BJ (cell line): ENCODE measurements at regions of chr6 and their contacts with region 1.

Region 1: DNA sequence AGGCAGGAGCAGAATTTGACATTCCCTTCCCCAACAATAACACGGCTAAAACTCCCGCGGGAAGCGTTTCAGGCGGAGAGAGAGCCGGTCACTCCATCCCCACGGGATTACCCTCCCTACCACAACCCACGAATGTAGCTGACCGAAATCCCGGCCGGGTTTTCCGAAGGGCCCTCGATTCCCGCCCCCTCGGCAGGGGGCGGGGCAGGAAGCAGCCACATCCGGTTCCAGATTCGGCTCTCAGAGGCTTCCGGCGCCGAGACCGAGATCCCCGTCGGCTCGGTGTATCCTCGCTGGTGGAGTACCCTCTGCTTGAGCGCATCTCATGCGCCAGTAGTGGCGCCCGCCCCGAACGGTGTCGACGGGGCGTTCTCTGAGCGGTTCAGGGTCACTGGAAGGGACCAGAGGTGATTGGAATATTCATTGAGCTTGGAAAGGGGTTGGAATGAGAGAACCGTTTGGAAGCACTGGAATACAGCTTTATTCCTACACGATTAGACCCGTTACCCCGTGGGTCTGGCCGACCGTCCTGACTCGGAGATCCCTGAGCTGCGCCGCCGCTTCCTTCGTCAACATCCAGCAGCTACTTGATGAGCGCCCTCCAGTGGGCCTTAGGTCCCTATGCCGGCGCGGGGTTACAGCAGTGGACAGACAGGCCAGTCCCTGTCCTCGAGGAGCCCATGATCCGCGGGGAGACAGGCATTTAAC is 649 bp upstream of the RGL2 start:
- DNase-seq: no peak
- H3K4me3 ChIP-seq: peak overlapping the region; percentile 81
- H3K27me3 ChIP-seq: no peaks in the 10 kb centered on the region
- CTCF ChIP-seq: peak; percentile 86

Region 2: GRCh38 chr6:33200219-33201146 is 98.9 kb before region 1 on chr6 and contains the starts of genes RXRB and SLC39A7:
- CTCF ChIA-PET with region 1: interaction called, 3 read pairs
- POLR2A ChIA-PET with region 1: interaction called, 24 read pairs
- DNase-seq: peak; percentile 96
- H3K4me3 ChIP-seq: peak within 1 kb of the TSS; percentile 78
- H3K27me3 ChIP-seq: no peaks in the 10 kb centered on the region
- CTCF ChIP-seq: no peak
- polyA plus RNA-seq, gene RXRB: 51.3 and 67.9 TPM in 2 replicates
- polyA plus RNA-seq, gene SLC39A7: 116 and 151 TPM in 2 replicates

Region 3: DNA sequence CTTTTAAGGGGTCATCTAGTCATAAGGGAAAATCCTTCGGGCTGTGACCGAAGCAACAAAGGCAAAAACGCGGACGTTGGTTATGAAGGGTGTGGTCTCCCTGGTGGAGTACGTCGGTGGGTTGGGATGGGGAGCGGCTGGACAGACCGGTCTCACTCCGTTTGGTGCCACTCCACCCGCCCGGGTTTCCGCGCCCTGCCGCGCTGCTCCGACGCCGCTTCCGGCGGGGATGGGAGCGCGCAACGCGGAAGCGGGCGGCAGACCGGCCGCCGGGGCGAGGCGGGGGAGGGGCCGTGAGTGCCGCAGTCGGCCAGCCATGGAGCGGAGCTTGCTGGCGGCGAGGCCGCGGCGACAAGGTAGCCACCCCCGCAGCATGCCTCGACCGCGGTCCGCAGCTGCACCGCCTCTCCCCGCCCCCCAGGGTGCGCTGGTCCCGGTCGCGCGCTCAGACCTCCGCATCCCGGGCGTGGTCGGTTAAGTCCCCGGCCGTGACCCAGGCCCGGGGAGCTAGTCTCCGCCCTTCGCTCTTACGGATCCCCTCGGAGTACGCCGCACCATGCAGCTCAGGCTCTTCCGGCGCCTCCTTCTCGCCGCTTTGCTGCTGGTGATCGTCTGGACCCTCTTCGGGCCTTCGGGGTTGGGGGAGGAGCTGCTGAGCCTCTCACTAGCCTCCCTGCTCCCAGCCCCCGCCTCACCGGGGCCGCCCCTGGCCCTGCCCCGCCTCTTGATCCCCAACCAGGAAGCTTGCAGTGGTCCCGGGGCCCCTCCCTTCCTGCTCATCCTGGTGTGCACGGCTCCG is 22.3 kb before region 1 on chr6 and contains the start of gene B3GALT4:
- CTCF ChIA-PET with region 1: interaction called, 13 read pairs
- POLR2A ChIA-PET with region 1: no interaction called
- DNase-seq: no peak
- H3K4me3 ChIP-seq: peak within 1 kb of the TSS; percentile 49
- H3K27me3 ChIP-seq: no peaks in the 10 kb centered on the region
- CTCF ChIP-seq: peak; percentile 39; the same call in 1 of the 2 replicates
- polyA plus RNA-seq, gene B3GALT4: 2.2 and 4.0 TPM in 2 replicates

Region 4: GRCh38 chr6:33288921-33289748 is 10.3 kb before region 1 on chr6 and contains the starts of genes PFDN6 and WDR46:
- CTCF ChIA-PET with region 1: interaction called, 21 read pairs
- POLR2A ChIA-PET with region 1: no interaction called
- DNase-seq: peak; percentile 80
- H3K4me3 ChIP-seq: peak within 1 kb of the TSS; percentile 64
- H3K27me3 ChIP-seq: no peaks in the 10 kb centered on the region
- CTCF ChIP-seq: no peak
- polyA plus RNA-seq, gene PFDN6: 49.0 and 55.5 TPM in 2 replicates
- polyA plus RNA-seq, gene WDR46: 45.6 and 78.9 TPM in 2 replicates

Region 5: GRCh38 chr6:33313709-33314514 is 14.5 kb after region 1 on chr6 and contains the start of gene TAPBP:
- CTCF ChIA-PET with region 1: interaction called, 16 read pairs
- POLR2A ChIA-PET with region 1: interaction called, 8 read pairs
- DNase-seq: no peak
- H3K4me3 ChIP-seq: peak within 1 kb of the TSS; percentile 73
- H3K27me3 ChIP-seq: no peaks in the 10 kb centered on the region
- CTCF ChIP-seq: no peak
- polyA plus RNA-seq, gene TAPBP: 23.1 and 37.9 TPM in 2 replicates